Activated T-helper 1 cell treated with anti-CD3 and anti-CD28 coated beads, Interleukin-12 subunit alpha, Interleukin-12 subunit beta, Interleukin-2, Interleukin-4 antibody, amounts not matched to agents 30 ng/mL and 10 ng/mL and 1 ng/mL, durations not matched to agents 14 hours and 24 hours and 36 hours (primary cell): ENCODE measurements at regions of chr6 and their contacts with region 1.

Region 1: GRCh38 chr6:27472617-27473400 is at the start of gene ZNF184:
- DNase-seq: peak; percentile 85
- H3K4me3 Mint-ChIP-seq: peak within 1 kb of the TSS; percentile 89
- H3K27ac Mint-ChIP-seq: peak within 1 kb of the TSS; percentile 93
- H3K4me1 Mint-ChIP-seq: peaks cover 46% of the 10 kb centered on the region
- H3K27me3 Mint-ChIP-seq: no peaks in the 10 kb centered on the region
- total RNA-seq, gene ZNF184: 7.6 and 8.0 TPM in 2 replicates

Region 2: DNA sequence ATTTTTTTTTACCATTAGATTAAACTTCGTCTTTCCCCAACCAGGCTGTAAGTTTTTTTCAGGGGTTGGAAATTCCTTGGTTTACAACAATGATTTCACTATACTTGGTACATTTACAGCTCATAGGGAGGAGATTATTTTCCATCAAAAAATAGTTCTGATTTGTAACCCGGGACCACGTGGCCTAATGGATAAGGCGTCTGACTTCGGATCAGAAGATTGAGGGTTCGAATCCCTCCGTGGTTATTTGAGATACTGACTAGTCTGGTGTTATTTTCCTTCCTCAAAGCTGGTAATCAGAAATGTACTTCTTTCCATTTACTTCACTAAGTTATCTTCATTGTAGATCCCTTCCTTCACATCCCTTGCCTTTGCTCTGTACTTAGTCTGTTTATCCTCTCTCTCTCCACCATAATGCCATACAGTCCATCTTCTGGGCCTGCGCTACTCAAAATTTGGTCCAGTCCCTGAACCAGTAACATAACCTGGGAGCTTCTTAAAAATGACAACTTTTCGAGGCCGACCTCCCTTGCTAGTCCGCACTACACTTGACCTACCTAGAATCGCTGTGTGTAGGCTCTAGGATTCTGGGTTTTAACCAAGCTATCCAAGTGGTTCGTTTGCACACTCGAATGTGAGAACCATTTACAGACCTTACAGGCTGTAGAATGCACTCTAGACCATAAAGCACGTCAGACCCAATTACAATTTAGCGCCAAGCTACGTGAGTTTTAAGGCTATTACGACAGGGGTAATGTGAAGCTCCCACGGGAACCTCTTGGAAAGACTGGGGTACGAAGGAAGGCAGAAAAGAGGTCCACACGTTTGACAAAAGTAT is 1149.9 kb before region 1 on chr6:
- intact Hi-C with region 1: loop called (anchors 1 kb)
- DNase-seq: peak; percentile 63
- H3K4me3 Mint-ChIP-seq: peak overlapping the region; percentile 89
- H3K27ac Mint-ChIP-seq: peak overlapping the region; percentile 51
- H3K4me1 Mint-ChIP-seq: peaks cover 51% of the 10 kb centered on the region
- H3K27me3 Mint-ChIP-seq: peaks cover 14% of the 10 kb centered on the region

Region 3: GRCh38 chr6:26596579-26597388 is 876.0 kb before region 1 on chr6 and contains the start of gene ABT1:
- intact Hi-C with region 1: loop called (anchors 5 kb)
- DNase-seq: peak; percentile 97
- H3K4me3 Mint-ChIP-seq: no peak within 1 kb of the TSS
- H3K27ac Mint-ChIP-seq: no peak within 1 kb of the TSS
- H3K4me1 Mint-ChIP-seq: peaks cover 39% of the 10 kb centered on the region
- H3K27me3 Mint-ChIP-seq: peaks cover 27% of the 10 kb centered on the region
- total RNA-seq, gene ABT1: 32.6 and 32.9 TPM in 2 replicates

Region 4: GRCh38 chr6:27177485-27178406 is 295.1 kb before region 1 on chr6:
- intact Hi-C with region 1: loop called (anchors 1 kb)
- DNase-seq: peak; percentile 66
- H3K4me3 Mint-ChIP-seq: peak overlapping the region; percentile 95
- H3K27ac Mint-ChIP-seq: peak overlapping the region; percentile 93
- H3K4me1 Mint-ChIP-seq: peaks cover 7% of the 10 kb centered on the region
- H3K27me3 Mint-ChIP-seq: peaks cover 36% of the 10 kb centered on the region

Region 5: DNA sequence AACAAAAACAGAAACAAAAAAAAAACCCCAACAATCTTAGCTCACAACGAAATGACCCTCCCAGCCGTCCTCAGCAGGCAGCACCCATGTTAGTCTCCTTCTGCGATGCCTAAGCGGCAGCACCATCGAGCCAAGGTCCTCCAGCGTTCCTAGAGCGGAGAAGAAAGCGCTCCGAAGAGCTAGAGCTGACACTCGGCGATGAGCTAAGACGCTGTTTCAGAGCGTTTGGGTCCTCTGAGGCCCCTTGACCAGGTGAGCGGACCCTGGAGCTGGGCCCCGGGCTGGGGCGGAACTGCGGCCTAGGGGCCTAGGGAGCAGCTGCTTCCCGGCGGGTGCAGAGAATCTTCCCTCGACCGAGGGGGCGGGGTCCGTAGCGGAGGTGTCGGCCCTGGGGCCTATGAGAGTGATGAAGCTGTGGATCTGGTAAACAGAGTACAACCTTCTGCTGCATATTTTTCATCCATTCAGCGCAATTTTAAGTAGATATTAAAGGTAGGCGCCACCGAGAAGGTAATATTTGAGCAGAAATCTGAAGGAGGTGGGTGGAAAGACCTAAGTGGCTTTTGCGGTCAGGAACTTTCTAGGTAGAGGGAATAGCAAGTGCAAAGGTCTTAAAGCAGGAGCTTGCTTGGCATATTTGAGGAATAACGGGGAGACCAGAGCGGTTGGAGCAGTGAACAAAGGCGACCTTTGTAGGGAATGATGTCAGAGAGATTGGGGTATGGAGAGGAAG is 794.3 kb after region 1 on chr6 and contains the start of gene ZSCAN26:
- intact Hi-C with region 1: loop called (anchors 10 kb)
- DNase-seq: peak; percentile 78
- H3K4me3 Mint-ChIP-seq: no peak within 1 kb of the TSS
- H3K27ac Mint-ChIP-seq: no peak within 1 kb of the TSS
- H3K4me1 Mint-ChIP-seq: peaks cover 9% of the 10 kb centered on the region
- H3K27me3 Mint-ChIP-seq: peaks cover 2% of the 10 kb centered on the region
- total RNA-seq, gene ZSCAN26: 5.4 and 6.0 TPM in 2 replicates

Region 6: DNA sequence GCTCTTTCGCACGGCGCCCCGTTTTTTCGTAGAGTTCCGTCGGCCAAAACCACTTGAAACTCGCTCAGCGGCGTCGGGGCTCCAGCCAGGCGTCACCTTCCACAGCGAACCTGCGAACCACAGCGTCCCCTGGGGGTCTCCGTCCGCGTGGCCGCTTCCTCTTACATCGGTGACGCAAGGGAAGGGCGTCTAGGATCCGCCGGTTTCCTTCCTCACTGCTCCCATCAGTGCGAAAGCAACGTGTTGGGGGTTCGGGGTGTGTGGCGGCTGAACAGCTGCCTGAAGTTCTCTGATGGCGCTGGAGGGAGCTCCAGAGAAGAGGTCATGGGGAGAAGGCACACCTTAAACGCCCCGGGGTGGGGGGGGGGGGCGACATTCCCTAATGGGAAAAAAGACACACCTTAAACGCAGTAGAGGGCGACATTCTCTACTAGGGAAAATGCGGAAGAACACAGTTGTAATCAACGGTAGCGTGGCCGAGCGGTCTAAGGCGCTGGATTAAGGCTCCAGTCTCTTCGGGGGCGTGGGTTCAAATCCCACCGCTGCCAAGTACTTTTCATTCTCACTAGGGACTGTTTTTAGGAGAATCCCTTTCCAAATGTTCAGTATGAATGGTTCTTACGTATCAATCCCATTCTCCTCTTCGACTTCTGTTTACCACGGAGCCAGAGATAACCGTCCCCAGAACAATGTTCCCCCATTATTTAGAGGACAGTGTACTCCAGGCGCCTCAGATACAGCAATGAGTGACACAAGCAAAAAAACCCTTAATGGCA is 1515.9 kb after region 1 on chr6:
- intact Hi-C with region 1: loop called (anchors 1 kb)
- DNase-seq: peak; percentile 52
- H3K4me3 Mint-ChIP-seq: peak overlapping the region; percentile 82
- H3K27ac Mint-ChIP-seq: peak overlapping the region; percentile 34
- H3K4me1 Mint-ChIP-seq: peaks cover 31% of the 10 kb centered on the region
- H3K27me3 Mint-ChIP-seq: peaks cover 28% of the 10 kb centered on the region